A549 (cell line): ENCODE measurements at regions of chr11 and their contacts with region 1.

Region 1: GRCh38 chr11:116641561-116642045 is 131.2 kb downstream of the BUD13 start:
- DNase-seq: peak; percentile 33 to 50
- ATAC-seq: peak; percentile 76 to 96
- H3K4me3 ChIP-seq: no peak overlapping the region
- H3K27ac ChIP-seq: no peak overlapping the region
- H3K4me1 ChIP-seq: no peaks in the 10 kb centered on the region
- CTCF ChIP-seq: peak; percentile 56
- EP300 ChIP-seq: no peak
- POLR2A ChIP-seq: no peak
- RAD21 ChIP-seq: peak; percentile 70 to 72

Region 2: DNA sequence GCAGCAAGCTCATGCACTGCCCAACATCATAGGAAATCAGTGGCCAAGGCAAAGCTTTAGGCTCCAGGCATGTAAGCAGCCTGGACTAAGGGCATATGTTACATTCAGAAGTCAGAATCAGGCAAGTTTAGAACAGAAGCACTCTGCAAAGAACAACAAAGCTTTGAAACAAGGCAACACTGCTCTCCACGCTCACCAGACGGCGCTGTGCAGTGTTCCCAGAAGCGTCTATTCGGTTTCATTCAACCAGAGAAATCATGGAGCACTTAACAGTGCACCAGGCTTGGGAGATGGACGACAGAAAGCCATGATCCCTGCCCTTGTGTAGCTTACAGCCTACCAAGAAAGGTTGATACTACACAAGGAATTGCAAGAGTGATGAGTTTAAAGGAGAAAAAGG is 424.6 kb before region 1 on chr11:
- CTCF ChIA-PET with region 1: interaction called, 11 read pairs
- POLR2A ChIA-PET with region 1: no interaction called
- DNase-seq: peak; percentile 12 to 48
- ATAC-seq: peak; percentile 80 to 83; a peak in 5 of 6 replicates
- H3K4me3 ChIP-seq: no peak overlapping the region
- H3K27ac ChIP-seq: no peak overlapping the region
- H3K4me1 ChIP-seq: no peaks in the 10 kb centered on the region
- CTCF ChIP-seq: peak; percentile 53
- EP300 ChIP-seq: no peak
- POLR2A ChIP-seq: no peak
- RAD21 ChIP-seq: peak; percentile 35 to 38; a peak in 2 of 5 replicates

Region 3: GRCh38 chr11:116454020-116454645 is 187.5 kb before region 1 on chr11:
- CTCF ChIA-PET with region 1: interaction called, 19 read pairs
- POLR2A ChIA-PET with region 1: no interaction called
- DNase-seq: peak; percentile 8 to 22
- ATAC-seq: peak; percentile 39 to 70; a peak in 3 of 6 replicates
- H3K4me3 ChIP-seq: no peak overlapping the region
- H3K27ac ChIP-seq: no peak overlapping the region
- H3K4me1 ChIP-seq: no peaks in the 10 kb centered on the region
- CTCF ChIP-seq: peak; percentile 27; the same call in 2 of the 3 replicates
- EP300 ChIP-seq: no peak
- POLR2A ChIP-seq: no peak
- RAD21 ChIP-seq: peak; percentile 36 to 44; a peak in 3 of 5 replicates

Region 4: DNA sequence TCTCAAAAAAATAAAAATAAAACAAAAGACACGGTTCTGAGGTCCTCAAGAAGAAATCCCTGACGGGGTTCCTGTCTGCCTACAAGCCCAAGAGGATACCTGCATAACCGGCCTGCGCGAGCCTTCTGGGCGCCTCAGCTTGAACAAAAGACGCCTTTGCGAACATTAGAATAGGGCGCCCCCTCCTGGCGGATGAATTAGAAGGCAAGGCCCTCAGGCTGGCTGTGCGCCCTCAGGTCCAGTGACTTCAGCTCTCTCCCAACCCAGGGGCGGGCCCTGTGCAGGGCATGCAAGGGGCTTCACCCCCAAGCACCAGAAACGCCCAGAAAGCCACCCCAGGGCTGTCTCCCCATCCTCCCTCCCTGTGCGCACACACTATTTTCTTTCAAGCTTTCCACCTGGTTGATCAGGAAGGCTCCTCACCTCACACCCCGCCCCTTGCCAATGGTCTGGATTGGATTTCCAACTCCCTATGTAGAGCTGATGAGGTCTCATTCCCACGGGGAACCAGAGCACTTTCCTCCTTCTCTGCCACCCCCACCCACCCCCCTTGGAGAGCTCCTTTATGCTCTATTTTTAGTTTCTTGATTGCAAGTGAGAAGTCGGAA is 142.1 kb before region 1 on chr11:
- CTCF ChIA-PET with region 1: interaction called, 11 read pairs
- POLR2A ChIA-PET with region 1: no interaction called
- DNase-seq: peak; percentile 27 to 66
- ATAC-seq: peak; percentile 68 to 95; a peak in 4 of 6 replicates
- H3K4me3 ChIP-seq: no peak overlapping the region
- H3K27ac ChIP-seq: no peak overlapping the region
- H3K4me1 ChIP-seq: no peaks in the 10 kb centered on the region
- CTCF ChIP-seq: peak; percentile 38
- EP300 ChIP-seq: no peak
- POLR2A ChIP-seq: no peak
- RAD21 ChIP-seq: peak; percentile 47 to 52

Region 5: DNA sequence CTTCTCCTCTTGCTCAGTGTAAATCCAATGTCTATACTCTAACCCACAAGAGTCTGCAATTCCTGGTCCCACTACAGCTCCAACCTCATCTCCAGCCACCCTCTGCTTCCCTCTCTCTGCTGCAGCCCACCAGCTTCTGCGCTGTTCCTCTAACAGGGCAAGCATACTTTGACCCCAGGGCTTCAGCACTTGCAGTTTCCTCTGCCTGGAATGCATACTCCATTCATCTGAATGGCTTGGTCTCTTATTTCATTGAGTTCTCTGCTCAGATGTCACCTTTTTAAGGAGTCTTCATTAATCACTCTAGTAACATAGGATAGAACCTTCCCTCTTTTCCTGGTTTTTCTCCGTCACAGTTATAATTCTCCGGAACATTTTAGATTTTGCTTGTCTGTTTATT is 10.4 kb before region 1 on chr11:
- CTCF ChIA-PET with region 1: interaction called, 12 read pairs
- POLR2A ChIA-PET with region 1: no interaction called
- DNase-seq: no peak
- ATAC-seq: no peak
- H3K4me3 ChIP-seq: no peak overlapping the region
- H3K27ac ChIP-seq: no peak overlapping the region
- H3K4me1 ChIP-seq: no peaks in the 10 kb centered on the region
- CTCF ChIP-seq: no peak
- EP300 ChIP-seq: no peak
- POLR2A ChIP-seq: no peak
- RAD21 ChIP-seq: no peak

Region 6: GRCh38 chr11:116651737-116652237 is 10.2 kb after region 1 on chr11:
- CTCF ChIA-PET with region 1: interaction called, 15 read pairs
- POLR2A ChIA-PET with region 1: no interaction called
- DNase-seq: no peak
- ATAC-seq: no peak
- H3K4me3 ChIP-seq: no peak overlapping the region
- H3K27ac ChIP-seq: no peak overlapping the region
- H3K4me1 ChIP-seq: no peaks in the 10 kb centered on the region
- CTCF ChIP-seq: no peak
- EP300 ChIP-seq: no peak
- POLR2A ChIP-seq: no peak
- RAD21 ChIP-seq: no peak

Region 7: DNA sequence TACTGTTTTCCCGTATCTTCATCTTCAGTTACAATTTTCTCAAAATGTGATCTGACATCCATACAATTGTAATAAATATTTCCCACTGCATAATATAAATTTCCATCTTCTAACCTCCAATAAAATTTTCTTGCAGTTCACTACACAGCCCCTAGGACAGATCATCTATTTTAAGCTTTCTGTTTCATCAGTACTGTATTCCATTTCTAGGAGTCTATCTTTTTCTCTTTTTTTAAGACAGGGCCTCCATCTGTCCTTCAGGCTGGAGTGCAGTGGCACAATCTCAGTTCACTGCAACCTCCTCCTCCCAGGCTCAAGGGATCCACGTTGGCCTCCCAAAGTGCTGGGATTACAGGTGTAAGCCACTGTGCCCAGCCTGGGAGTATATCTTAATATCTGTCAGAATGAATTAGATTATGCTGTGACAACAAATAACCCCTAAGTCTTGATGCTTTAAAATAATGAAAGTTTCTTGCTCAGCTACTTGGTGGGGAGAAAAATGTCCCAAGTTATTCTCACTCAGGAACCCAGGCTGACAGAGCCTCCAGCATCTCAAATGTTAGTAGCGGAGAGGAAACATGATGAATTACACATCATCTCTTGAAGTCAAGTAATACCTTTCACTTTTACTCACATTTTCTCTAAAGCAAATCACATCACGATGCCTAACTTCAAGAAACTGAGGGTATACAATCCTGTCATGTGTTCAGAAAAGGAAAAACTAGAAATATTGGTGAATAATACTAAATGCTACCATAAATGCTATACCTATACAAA is 38.9 kb after region 1 on chr11:
- CTCF ChIA-PET with region 1: no interaction called
- POLR2A ChIA-PET with region 1: no interaction called
- DNase-seq: no peak
- ATAC-seq: no peak
- H3K4me3 ChIP-seq: no peak overlapping the region
- H3K27ac ChIP-seq: no peak overlapping the region
- H3K4me1 ChIP-seq: no peaks in the 10 kb centered on the region
- CTCF ChIP-seq: no peak
- EP300 ChIP-seq: no peak
- POLR2A ChIP-seq: no peak
- RAD21 ChIP-seq: no peak

Region 8: DNA sequence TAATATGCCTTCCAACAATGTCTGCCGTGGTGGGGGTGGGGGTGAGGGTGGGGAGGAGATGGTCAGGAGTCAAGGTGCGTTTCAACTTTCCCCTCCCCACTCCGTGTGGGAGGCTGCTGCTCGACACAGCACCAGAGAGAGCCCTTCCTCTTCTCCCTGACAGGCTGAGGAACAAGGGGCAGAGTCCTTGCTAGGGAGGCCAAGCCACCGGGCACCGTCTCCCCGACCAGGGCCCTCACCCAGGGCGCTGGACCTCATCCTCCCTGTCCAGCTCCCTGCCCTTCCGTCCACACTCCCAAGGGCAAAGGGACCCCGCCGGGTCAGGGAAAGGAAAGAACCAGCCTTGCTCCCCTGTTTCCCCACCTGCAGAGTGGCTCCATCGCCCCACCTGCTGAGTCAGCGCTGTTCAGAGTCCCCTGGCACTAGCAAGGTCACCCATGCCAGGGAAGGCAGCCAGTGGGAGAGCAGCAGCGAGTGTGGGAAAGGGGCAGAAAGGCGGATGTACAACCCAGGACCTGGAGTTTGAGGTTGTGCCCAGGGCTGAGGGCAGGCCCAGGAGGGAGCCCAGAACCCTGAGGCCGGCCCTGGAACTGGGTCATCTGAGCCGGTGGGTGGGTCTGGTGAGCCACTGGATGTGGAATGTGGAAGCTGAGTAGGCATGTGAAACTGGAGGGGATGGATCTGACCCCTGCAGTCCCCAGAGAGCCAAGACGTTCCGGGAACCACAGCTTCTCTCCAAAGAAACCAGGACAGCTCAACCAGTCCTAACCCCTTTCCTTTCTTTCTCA is 84.0 kb after region 1 on chr11:
- CTCF ChIA-PET with region 1: no interaction called
- POLR2A ChIA-PET with region 1: no interaction called
- DNase-seq: no peak
- ATAC-seq: no peak; a peak in 1 of 6 replicates
- H3K4me3 ChIP-seq: no peak overlapping the region
- H3K27ac ChIP-seq: no peak overlapping the region
- H3K4me1 ChIP-seq: no peaks in the 10 kb centered on the region
- CTCF ChIP-seq: no peak
- EP300 ChIP-seq: no peak
- POLR2A ChIP-seq: no peak
- RAD21 ChIP-seq: no peak

Region 9: GRCh38 chr11:117072517-117073461 is 431.2 kb after region 1 on chr11:
- CTCF ChIA-PET with region 1: no interaction called
- POLR2A ChIA-PET with region 1: no interaction called
- DNase-seq: peak; percentile 71 to 87
- ATAC-seq: peak; percentile 71 to 81
- H3K4me3 ChIP-seq: peak overlapping the region; percentile 11; the same call in 1 of the 3 replicates
- H3K27ac ChIP-seq: peak overlapping the region; percentile 71 to 83
- H3K4me1 ChIP-seq: peaks cover 74% of the 10 kb centered on the region
- CTCF ChIP-seq: no peak
- EP300 ChIP-seq: peak; percentile 66 to 67; a peak in 2 of 5 replicates
- POLR2A ChIP-seq: no peak
- RAD21 ChIP-seq: no peak; a peak in 2 of 5 replicates